H1 (cell line): ENCODE measurements at regions of chr1 and their contacts with region 1.

Region 1: GRCh38 chr1:161238039-161238473 is at the start of gene NR1I3:
- DNase-seq: no peak
- H3K4me3 ChIP-seq: no peak within 1 kb of the TSS
- H3K27ac ChIP-seq: no peak within 1 kb of the TSS
- H3K4me1 ChIP-seq: no peaks in the 10 kb centered on the region
- H3K27me3 ChIP-seq: no peaks in the 10 kb centered on the region
- CTCF ChIP-seq: no peak
- EP300 ChIP-seq: no peak
- POLR2A ChIP-seq: no peak
- RAD21 ChIP-seq: no peak
- total RNA-seq, gene NR1I3: not detected in 2 replicates

Region 2: DNA sequence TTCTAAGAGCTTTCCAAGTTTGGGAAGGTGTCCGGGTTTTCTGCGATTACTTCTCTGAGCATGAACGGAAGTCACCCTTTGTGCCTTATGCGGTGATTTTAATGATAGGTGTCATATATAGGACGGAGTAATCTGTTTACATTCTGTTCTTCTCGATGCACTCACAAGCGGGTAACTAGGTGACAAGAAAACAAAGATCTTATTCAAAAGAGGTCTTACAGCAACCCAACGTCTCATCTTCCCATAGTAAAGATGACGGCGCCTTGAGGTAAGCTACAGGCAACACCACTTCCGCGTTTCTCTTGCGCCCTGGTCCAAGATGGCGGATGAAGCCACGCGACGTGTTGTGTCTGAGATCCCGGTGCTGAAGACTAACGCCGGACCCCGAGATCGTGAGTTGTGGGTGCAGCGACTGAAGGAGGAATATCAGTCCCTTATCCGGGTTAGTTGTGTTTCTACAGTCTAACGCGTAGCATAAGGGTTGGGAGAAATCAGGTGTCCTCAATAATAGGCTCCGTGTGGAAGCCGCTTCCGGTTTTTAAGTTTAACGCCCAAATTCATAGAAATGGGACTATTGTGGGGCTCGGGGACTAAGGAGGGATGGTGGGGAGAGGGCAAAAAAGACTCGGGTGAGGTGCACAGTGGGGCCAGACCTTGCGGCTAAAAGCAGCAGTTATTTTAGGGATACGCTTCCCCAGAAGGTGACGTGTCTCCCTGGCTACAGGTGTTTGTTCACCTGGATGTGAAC is 84.2 kb before region 1 on chr1 and contains the start of gene UFC1:
- CTCF ChIA-PET with region 1: no interaction called
- POLR2A ChIA-PET with region 1: no interaction called
- DNase-seq: peak in 1 of 2 experiments; percentile 80
- H3K4me3 ChIP-seq: peak within 1 kb of the TSS; percentile 91 to 99 (median 96)
- H3K27ac ChIP-seq: peak within 1 kb of the TSS; percentile 98
- H3K4me1 ChIP-seq: peaks cover 0 to 7% (median under 1%) of the 10 kb centered on the region in 4 experiments; a peak in 3 of 7 replicates
- H3K27me3 ChIP-seq: no peaks in the 10 kb centered on the region
- CTCF ChIP-seq: no peak
- EP300 ChIP-seq: 0 out of 3 replicates have a peak, but pooled peaks of 1 of the 2 experiments have one; percentile 2
- POLR2A ChIP-seq: peak; percentile 84 to 94
- RAD21 ChIP-seq: no peak
- total RNA-seq, gene UFC1: 67.8 and 71.0 TPM in 2 replicates

Region 3: DNA sequence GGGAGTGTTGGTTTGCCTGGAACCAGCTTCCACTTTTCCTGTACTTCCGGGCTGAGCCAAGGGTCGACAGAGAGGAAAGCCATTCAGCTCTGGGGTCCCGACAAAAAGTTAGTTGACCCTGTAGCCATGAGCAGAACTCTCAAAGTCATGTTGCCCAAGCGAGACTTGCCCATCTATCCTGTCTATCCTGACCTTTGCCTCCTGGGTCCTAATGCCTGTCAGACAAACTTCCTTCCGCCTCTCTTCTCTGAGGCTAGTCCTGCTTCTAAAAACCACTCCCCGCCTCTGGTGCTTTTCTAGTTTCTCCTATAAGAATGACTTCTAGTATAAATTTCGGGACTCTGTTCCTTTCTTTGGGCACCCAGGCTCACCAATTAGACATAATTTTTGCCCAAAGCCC is 12.8 kb after region 1 on chr1:
- CTCF ChIA-PET with region 1: interaction called, 87 read pairs
- POLR2A ChIA-PET with region 1: interaction called, 6 read pairs
- DNase-seq: no peak
- H3K4me3 ChIP-seq: no peak overlapping the region
- H3K27ac ChIP-seq: no peak overlapping the region
- H3K4me1 ChIP-seq: no peaks in the 10 kb centered on the region
- H3K27me3 ChIP-seq: no peaks in the 10 kb centered on the region
- CTCF ChIP-seq: no peak
- EP300 ChIP-seq: no peak
- POLR2A ChIP-seq: no peak
- RAD21 ChIP-seq: no peak

Region 4: DNA sequence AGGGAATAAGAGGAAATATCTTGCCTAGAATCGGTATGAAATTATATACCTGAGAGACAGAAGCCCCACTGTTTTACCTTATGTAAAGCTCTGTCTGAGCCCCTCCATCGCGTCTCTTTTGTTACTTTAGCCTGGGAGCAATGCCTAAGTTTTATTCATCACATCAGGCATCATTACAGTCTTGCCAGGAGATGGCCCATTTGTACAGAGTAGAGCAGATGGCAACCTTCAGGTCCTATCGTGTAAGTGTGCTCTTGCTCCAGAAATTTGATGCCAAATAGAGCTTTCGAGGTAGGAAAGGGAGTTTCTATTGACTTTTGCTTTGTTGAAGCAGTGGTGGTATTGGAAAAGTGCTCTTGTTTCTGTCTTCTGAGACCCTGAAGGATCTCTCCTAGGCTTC is 104.8 kb after region 1 on chr1:
- CTCF ChIA-PET with region 1: no interaction called
- POLR2A ChIA-PET with region 1: no interaction called
- DNase-seq: no peak
- H3K4me3 ChIP-seq: no peak overlapping the region
- H3K27ac ChIP-seq: no peak overlapping the region
- H3K4me1 ChIP-seq: no peaks in the 10 kb centered on the region
- H3K27me3 ChIP-seq: no peaks in the 10 kb centered on the region
- CTCF ChIP-seq: no peak
- EP300 ChIP-seq: no peak
- POLR2A ChIP-seq: no peak
- RAD21 ChIP-seq: no peak